Activated naive CD4-positive, alpha-beta T cell treated with anti-CD3 and anti-CD28 coated beads for 36 hours (primary cell): ENCODE measurements at regions of chr3 and their contacts with region 1.

Region 1: DNA sequence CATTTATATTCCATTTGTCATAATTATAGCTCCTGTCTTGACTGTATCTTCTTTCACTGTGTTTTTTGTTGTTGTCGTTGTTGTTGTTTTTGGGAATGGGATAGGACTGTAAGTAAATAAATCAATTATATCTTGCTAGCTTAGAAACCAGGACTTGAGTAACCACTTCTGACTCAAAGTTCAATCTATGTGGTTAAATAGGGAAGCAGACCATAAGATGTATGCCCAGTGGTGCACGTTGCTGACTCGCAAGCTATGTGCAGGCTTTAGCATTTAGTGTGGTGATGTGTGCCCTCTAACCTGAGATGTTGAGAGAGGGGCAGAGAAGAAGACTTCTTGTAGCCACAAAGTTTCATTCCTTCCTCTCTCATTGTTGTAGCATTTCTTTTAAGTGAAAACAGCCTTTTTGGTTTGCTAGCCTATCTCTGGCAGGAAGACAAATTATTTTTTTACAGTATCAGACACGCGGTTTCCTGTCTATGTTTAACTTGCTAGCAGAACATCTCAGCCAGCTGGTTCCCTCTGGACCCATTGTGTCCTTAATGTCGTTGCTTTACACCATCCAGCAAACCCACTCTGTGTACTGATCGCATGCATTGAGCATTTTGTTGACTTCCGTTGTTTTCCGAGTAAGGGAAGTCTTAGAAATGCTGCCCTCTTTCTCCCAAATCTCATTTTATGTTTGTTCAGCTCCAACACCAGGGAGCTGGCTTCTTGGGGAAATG is 52.1 kb downstream of the TGFBR2 start:
- DNase-seq: peak; percentile 62
- H3K4me3 Mint-ChIP-seq: peak overlapping the region; percentile 62
- H3K27ac Mint-ChIP-seq: peak overlapping the region; percentile 97
- H3K4me1 Mint-ChIP-seq: peaks cover 98% of the 10 kb centered on the region
- H3K27me3 Mint-ChIP-seq: no peaks in the 10 kb centered on the region

Region 2: DNA sequence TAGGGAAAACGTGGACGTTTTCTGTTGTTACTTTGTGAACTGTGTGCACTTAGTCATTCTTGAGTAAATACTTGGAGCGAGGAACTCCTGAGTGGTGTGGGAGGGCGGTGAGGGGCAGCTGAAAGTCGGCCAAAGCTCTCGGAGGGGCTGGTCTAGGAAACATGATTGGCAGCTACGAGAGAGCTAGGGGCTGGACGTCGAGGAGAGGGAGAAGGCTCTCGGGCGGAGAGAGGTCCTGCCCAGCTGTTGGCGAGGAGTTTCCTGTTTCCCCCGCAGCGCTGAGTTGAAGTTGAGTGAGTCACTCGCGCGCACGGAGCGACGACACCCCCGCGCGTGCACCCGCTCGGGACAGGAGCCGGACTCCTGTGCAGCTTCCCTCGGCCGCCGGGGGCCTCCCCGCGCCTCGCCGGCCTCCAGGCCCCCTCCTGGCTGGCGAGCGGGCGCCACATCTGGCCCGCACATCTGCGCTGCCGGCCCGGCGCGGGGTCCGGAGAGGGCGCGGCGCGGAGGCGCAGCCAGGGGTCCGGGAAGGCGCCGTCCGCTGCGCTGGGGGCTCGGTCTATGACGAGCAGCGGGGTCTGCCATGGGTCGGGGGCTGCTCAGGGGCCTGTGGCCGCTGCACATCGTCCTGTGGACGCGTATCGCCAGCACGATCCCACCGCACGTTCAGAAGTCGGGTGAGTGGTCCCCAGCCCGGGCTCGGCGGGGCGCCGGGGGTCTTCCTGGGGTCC is 52.0 kb before region 1 on chr3 and contains the start of gene TGFBR2:
- CTCF ChIA-PET with region 1: interaction called, 3 read pairs
- intact Hi-C with region 1: loop called (anchors 1 kb)
- DNase-seq: peak; percentile 90
- H3K4me3 Mint-ChIP-seq: peak within 1 kb of the TSS; percentile 94
- H3K27ac Mint-ChIP-seq: peak within 1 kb of the TSS; percentile 100
- H3K4me1 Mint-ChIP-seq: peaks cover 52% of the 10 kb centered on the region
- H3K27me3 Mint-ChIP-seq: no peaks in the 10 kb centered on the region
- total RNA-seq, gene TGFBR2: 57.8 to 58.1 TPM

Region 3: GRCh38 chr3:30620402-30621360 is 37.8 kb before region 1 on chr3:
- CTCF ChIA-PET with region 1: interaction called, 8 read pairs
- intact Hi-C with region 1: loop called (anchors 1 kb)
- DNase-seq: peak; percentile 73
- H3K4me3 Mint-ChIP-seq: peak overlapping the region; percentile 58
- H3K27ac Mint-ChIP-seq: peak overlapping the region; percentile 98
- H3K4me1 Mint-ChIP-seq: peaks cover 89% of the 10 kb centered on the region
- H3K27me3 Mint-ChIP-seq: no peaks in the 10 kb centered on the region

Region 4: DNA sequence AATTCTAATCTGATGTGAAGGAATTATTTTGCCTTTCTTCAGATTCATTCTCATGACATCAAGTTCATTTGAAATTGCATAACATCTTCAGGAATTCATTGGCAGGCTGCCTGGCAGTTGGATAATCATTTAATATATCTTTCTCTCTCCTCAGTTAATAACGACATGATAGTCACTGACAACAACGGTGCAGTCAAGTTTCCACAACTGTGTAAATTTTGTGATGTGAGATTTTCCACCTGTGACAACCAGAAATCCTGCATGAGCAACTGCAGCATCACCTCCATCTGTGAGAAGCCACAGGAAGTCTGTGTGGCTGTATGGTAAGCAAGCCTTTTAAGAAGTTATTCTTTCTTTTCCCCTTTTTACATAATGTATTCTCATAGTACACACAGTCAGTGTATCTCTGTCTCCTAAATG is 13.9 kb before region 1 on chr3:
- CTCF ChIA-PET with region 1: interaction called, 8 read pairs
- intact Hi-C with region 1: loop called (anchors 1 kb)
- DNase-seq: peak; percentile 76
- H3K4me3 Mint-ChIP-seq: peak overlapping the region; percentile 56
- H3K27ac Mint-ChIP-seq: peak overlapping the region; percentile 98
- H3K4me1 Mint-ChIP-seq: peaks cover 92% of the 10 kb centered on the region
- H3K27me3 Mint-ChIP-seq: no peaks in the 10 kb centered on the region

Region 5: DNA sequence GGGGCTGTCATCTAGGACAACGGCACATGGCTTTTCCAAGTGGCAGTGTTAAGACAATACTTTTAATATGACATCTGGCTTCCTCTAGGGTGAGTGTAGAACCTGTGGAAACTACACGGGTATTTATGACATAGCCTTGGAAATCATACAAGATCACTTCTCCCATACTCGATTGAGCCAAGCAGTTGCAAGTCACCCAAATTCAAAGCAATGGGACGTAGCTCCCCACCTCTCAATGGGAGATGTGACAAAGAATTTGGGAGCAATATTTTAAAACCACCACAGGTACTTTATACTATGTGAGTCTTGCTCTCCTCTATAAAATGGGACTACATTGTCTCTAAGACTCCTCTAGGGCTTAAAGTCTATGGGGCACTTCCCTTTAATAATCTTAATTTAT is 41.4 kb after region 1 on chr3:
- CTCF ChIA-PET with region 1: no interaction called
- intact Hi-C with region 1: no loop called
- DNase-seq: no peak
- H3K4me3 Mint-ChIP-seq: no peak overlapping the region
- H3K27ac Mint-ChIP-seq: no peak overlapping the region
- H3K4me1 Mint-ChIP-seq: peaks cover 29% of the 10 kb centered on the region
- H3K27me3 Mint-ChIP-seq: no peaks in the 10 kb centered on the region

Region 6: DNA sequence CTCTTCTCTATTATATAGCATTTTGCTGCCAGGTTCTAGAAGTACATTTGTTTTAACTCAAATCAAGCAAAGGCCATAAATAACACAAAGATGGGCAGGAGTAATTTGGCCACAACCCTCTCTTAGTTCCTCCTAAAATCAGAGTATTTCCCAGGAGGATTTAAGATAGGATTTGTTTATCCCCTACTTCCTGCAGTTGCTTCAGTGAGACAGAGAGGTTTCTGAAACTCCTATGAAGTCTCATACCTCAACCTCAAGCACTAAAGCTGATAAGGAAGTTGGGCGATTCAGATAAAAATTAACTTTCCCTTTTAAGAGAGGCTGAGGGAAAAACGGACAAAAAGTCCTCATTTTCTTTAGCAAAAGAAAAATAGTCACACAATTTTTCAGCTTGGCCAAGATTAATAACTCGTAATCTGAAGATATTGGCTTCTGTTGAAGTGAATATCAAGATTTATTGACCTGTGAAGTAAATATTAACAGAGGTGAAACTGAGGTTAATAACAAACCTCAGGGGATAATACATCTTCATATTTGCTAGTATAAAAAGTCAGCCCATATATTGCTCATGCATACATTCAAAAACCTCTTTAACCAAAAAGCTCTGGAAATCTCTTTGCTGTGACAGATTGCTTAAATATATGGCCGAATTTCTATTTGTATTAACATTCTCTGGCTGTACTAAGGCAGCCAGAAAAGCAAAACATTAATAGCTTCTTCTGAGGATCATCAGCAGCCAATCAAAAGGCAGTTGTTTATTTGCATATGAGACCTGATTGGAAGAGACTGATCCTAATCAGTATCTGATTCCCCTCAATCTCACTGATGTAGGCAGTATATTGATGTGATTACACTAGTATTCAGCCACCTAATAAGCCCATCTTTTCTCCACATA is 326.6 kb after region 1 on chr3:
- CTCF ChIA-PET with region 1: no interaction called
- intact Hi-C with region 1: no loop called
- DNase-seq: no peak
- H3K4me3 Mint-ChIP-seq: no peak overlapping the region
- H3K27ac Mint-ChIP-seq: no peak overlapping the region
- H3K4me1 Mint-ChIP-seq: no peaks in the 10 kb centered on the region
- H3K27me3 Mint-ChIP-seq: no peaks in the 10 kb centered on the region

Region 7: GRCh38 chr3:31219131-31219843 is 560.8 kb after region 1 on chr3:
- CTCF ChIA-PET with region 1: no interaction called
- intact Hi-C with region 1: loop called (anchors 10 kb)
- DNase-seq: no peak
- H3K4me3 Mint-ChIP-seq: no peak overlapping the region
- H3K27ac Mint-ChIP-seq: no peak overlapping the region
- H3K4me1 Mint-ChIP-seq: peaks cover 89% of the 10 kb centered on the region
- H3K27me3 Mint-ChIP-seq: no peaks in the 10 kb centered on the region